Posterior vena cava (tissue), 2 donors: ENCODE measurements at regions of chr15 and their contacts with region 1.

Region 1: DNA sequence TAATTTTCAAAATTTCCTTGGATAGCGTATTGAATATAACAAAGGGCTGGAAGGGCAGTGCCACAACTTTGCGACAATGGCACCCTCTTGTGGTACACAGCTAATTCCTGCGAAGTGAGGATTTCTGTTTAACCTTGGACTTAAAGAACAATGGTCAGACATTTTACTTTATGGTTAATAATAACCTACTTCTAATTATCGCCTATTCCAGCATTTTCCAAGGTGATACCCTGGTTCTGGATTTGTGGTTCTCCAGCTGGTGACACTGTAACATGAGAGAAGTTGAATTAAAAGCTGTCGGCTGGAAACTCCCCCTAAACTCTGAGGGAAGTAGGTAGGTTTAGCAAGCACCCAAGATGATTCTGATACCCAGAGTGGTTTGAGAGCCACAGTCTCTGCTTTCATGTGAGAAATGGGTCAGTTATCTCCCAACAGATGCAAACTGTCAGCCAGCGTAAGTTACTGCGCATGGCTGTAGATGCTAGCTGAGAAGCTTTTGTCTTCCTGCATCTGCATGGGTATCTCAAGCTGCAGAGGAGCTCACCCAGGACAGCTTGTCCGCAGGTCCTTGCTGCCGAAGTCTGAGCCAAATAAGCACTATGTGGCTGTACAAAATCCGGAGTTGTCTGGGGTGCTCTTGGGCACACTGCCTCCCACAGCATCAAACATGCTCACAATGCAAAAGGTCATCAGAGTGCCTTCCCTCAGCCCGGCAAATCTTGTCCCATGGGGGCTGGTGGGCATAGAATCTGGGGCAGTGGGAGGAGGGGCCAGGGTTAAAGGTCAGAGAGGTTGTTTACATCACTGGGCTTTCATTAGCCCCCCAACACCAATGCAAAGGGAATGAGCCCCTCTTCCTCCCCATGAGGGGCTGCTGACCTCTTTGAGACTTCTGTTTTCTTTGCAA is 6.6 kb upstream of the CHSY1 start:
- DNase-seq: no peak

Region 2: DNA sequence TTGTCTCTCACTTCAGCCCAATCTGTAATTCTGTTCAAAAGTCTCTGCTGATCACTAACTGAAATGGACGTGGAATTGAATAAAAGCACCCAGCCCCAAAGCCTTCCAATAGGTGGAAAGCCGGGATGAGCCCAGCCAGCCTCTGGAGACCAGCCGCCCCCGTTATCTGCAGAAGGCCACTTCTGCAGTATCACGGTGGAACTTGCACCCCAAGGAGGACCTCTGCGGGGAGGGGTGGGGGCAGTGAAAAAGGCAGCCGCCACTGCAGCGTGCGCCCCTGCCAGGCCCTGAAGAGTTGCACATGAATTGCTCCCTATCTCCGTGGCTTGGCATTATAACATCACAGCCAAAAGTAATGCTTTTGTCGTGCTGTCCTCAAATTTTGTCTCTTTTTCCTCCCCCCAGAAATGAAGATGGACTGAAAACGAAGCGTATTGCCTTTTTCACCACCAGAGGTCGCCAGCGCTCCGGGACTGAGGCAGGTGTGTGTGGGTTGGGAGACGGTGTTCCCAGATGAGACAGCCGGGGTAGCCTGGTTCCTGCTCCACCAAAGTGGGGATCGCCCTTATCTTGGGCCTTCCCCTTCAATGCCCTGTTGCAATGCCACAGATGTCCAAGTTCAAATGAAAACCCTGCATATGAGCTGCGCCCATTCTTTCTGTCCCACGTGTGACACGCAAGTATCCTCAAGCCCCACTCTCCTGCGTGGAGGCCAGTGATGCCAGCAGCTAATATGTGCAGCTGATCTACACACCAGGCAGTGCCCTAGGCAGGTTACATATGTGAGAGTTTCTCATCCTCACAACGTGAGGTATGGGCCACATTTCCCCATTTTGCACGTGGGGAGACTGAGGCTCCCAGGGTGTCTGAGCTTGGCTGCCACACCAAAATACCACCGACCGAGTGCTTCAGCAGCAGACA is 243.3 kb before region 1 on chr15:
- intact Hi-C with region 1: loop called (anchors 2 to 5 kb)
- DNase-seq: peak; percentile 91